Colonic mucosa (tissue), 4 donors: ENCODE measurements at regions of chr4 and their contacts with region 1.

Region 1: DNA sequence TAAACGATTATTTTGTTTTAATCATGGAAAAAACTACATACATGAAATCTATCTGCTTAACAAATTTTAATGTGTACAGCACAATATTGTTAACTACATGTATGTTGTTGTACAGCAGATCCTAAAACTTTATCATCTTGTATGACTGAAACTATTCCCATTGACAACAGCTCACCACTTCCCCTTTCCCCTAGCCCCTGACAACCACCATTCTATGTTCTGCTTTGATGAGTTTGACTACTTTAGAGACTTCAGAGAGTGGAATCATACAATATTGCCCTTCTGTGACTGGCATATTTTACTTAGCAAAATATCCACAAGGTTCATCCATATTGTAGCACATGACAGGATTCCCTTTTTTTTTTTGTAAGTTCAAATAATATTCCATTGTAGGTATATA is 185.9 kb downstream of the CFAP299 start:
- DNase-seq: no peak
- H3K4me3 ChIP-seq: no peak overlapping the region
- H3K27ac ChIP-seq: no peak overlapping the region
- H3K4me1 ChIP-seq: no peaks in the 10 kb centered on the region
- H3K27me3 ChIP-seq: no peaks in the 10 kb centered on the region
- CTCF ChIP-seq: no peak

Region 2: DNA sequence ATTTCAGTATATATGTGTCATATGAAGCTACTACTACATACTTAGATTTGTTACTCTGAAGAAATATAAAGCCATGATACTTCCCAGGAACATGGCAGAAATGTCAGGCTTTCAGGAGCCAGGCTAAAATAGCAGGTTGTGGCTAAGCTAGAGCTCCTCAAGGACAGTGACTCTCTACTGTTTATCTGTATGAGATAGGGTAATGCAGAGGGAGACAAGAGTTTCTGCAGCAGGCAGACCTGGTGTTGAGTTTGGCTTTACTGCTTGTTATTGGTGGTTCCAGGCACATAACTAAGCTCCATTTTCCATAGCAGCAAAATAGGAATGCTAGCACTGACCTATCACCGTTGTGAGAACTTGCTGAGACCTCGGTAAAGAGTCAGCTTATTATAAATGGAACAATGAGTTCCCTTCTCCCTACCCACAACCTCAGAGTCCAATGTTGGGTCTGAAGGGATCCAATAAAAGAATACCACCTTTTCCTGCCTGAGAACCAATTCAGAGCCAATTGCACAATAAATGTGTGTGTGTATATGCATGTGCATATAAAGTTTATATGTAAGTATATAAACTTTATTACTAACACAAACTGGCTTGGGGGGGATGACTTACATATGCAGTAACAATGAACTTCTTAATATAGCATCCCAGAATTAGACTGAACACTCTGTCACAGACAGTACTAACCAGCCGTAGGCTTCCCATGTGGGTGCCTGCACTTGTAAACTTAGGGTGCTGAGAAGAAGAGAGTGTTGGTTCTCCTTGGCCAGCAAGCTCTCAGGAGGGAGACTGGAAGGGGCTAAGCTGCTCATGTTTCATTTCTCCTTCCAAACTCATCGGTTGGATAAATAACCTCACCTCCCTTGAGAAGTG is 1530.3 kb before region 1 on chr4:
- intact Hi-C with region 1: loop called (anchors 10 kb)
- DNase-seq: no peak
- H3K4me3 ChIP-seq: no peak overlapping the region
- H3K27ac ChIP-seq: no peak overlapping the region
- H3K4me1 ChIP-seq: no peaks in the 10 kb centered on the region
- H3K27me3 ChIP-seq: no peaks in the 10 kb centered on the region
- CTCF ChIP-seq: no peak